Endothelial cell of umbilical vein (primary cell): ENCODE measurements at regions of chr19 and their contacts with region 1.

Region 1: GRCh38 chr19:58380722-58381466 is at the start of gene ZNF837:
- DNase-seq: peak; percentile 100
- H3K4me3 ChIP-seq: peak within 1 kb of the TSS; percentile 59 to 84 (median 72)
- H3K27ac ChIP-seq: peak within 1 kb of the TSS; percentile 63
- H3K4me1 ChIP-seq: peaks cover 8% of the 10 kb centered on the region
- H3K27me3 ChIP-seq: no peaks in the 10 kb centered on the region
- CTCF ChIP-seq: no peak
- POLR2A ChIP-seq: peak; percentile 72
- total RNA-seq, gene ZNF837: 1.4 and 1.7 TPM in 2 replicates

Region 2: GRCh38 chr19:58278157-58279041 is 102.5 kb before region 1 on chr19 and contains the start of gene ZNF8:
- CTCF ChIA-PET with region 1: no interaction called
- POLR2A ChIA-PET with region 1: no interaction called
- dilution Hi-C with region 1: no loop called
- intact Hi-C with region 1: loop called (anchors 1 kb)
- DNase-seq: peak; percentile 99
- H3K4me3 ChIP-seq: peak within 1 kb of the TSS; percentile 67 to 72 (median 70)
- H3K27ac ChIP-seq: peak within 1 kb of the TSS; percentile 76
- H3K4me1 ChIP-seq: peaks cover 8% of the 10 kb centered on the region
- H3K27me3 ChIP-seq: no peaks in the 10 kb centered on the region
- CTCF ChIP-seq: peak in 1 of 2 donors; percentile 22
- POLR2A ChIP-seq: peak; percentile 68
- total RNA-seq, gene ZNF8: 6.3 and 6.8 TPM in 2 replicates

Region 3: DNA sequence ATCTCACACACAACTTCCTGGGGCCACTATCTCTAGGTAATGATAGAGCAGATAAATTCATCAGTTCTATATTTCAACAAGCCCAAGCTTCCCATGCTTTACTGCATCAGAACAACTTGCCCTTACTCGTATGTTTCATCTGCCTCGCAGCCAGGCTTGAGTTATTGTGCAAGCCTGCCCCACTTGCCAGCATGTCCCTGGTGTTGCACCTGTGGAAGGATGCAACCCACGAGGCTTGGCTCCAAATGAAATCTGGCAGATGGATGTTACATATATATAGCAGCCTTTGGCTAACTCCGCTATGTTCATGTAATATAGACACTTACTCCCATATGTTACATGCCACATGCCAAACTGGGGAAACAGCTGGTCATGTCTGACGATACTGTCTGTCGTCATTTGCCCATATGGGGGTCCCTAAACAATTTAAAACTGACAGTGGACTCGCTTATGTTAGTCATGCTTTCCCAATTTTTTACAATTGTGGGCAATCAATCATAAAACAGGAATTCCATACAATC is 69.5 kb before region 1 on chr19:
- CTCF ChIA-PET with region 1: no interaction called
- POLR2A ChIA-PET with region 1: no interaction called
- dilution Hi-C with region 1: no loop called
- intact Hi-C with region 1: no loop called
- DNase-seq: no peak
- H3K4me3 ChIP-seq: no peak overlapping the region
- H3K27ac ChIP-seq: no peak overlapping the region
- H3K4me1 ChIP-seq: no peaks in the 10 kb centered on the region
- H3K27me3 ChIP-seq: no peaks in the 10 kb centered on the region
- CTCF ChIP-seq: no peak
- POLR2A ChIP-seq: no peak

Region 4: DNA sequence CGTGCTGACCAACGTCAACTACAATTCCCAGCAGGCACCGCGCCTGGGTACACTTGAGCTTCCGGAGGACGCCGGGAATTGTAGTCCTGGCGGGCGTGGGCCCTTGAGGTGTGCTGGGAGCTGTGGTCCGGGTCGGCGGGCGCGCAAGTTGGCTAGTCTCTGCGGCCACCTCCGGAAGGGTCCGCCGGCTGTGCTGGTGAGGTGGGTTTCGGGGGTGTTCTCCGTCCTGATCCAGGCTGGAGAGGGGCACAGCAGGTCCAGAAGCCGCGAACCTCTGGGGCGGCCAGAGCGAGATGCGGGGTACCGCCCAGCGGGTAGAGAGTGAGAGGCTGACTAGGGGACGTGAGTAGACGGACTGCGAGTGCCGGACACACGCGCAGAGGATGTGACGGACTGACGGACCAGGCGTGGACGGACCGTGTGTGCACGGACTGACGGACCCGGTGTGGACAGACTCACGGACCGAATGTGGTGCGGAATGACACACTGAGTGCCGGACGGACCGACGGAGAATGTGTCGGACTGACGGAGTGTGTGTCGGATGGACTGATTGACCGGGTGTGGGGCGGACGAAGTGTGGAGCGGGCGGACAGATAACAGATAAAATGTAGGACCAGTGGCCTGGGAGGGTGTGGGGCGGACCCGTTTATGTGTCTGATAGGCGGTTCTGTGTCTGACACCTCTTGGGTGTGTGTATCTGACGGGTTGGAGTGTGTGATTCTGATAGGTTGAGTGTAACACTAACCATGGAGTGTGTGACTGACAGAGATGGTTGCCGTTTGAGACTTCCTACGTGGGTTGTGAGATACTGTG is 53.8 kb before region 1 on chr19 and contains the start of gene ZSCAN22:
- CTCF ChIA-PET with region 1: no interaction called
- POLR2A ChIA-PET with region 1: no interaction called
- dilution Hi-C with region 1: no loop called
- intact Hi-C with region 1: loop called (anchors 1 kb)
- DNase-seq: peak; percentile 96
- H3K4me3 ChIP-seq: peak within 1 kb of the TSS; percentile 3 to 63 (median 56)
- H3K27ac ChIP-seq: peak within 1 kb of the TSS; percentile 1
- H3K4me1 ChIP-seq: peaks cover 12% of the 10 kb centered on the region
- H3K27me3 ChIP-seq: no peaks in the 10 kb centered on the region
- CTCF ChIP-seq: no peak
- POLR2A ChIP-seq: peak; percentile 76
- total RNA-seq, gene ZSCAN22: 3.6 and 3.7 TPM in 2 replicates

Region 5: DNA sequence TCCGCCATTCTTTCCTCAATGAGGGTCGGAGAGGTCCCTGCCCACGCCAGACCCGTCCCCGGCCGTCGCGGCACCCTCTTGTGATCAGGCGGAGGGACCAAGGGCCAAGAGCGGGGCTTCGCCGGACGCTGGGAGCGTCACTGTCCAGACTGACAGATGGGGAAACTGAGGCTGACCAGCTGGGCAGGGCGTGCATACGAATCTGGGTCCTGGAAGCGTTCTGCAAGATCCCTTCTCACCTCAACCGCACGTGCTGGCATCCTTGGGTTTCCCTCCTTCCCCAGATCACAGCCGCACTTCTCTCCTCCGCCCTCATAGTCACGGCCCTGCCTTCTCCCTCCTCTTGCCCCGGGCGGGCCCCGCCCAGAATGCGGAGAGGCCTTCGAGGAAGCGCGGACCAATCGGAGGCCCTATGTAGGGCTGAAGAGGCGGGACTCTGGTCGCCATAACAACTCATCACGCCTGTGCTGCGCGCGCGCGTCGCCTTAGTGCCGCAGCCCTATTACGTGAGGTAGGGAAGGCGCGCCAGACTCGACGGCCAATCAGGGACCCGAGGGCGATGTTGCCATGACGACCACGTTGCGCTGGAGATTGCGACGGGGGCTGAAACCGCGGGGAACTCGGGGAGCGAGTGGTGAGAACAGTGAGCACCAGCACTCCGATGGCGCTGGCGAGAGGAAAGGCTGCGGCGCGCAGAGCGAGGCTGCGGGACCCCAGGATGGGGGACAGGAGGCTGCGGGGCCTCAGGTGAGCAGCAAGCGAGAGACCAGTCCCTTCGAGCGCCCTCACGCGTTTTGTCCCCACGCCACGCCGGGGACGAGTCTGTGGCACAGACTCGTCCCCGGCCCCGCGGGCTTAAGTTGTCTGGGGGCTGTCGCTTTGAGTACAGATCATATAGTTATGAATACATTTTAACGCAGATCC is 20.3 kb after region 1 on chr19:
- CTCF ChIA-PET with region 1: no interaction called
- POLR2A ChIA-PET with region 1: no interaction called
- dilution Hi-C with region 1: no loop called
- intact Hi-C with region 1: loop called (anchors 1 kb)
- DNase-seq: peak; percentile 100
- H3K4me3 ChIP-seq: peak overlapping the region in 2 of 3 experiments; percentile 41 to 43
- H3K27ac ChIP-seq: no peak overlapping the region
- H3K4me1 ChIP-seq: peaks cover 12% of the 10 kb centered on the region
- H3K27me3 ChIP-seq: no peaks in the 10 kb centered on the region
- CTCF ChIP-seq: no peak
- POLR2A ChIP-seq: peak; percentile 22

Region 6: GRCh38 chr19:58439576-58440554 is 59.0 kb after region 1 on chr19 and contains the start of gene ZNF132:
- CTCF ChIA-PET with region 1: no interaction called
- POLR2A ChIA-PET with region 1: no interaction called
- dilution Hi-C with region 1: no loop called
- intact Hi-C with region 1: no loop called
- DNase-seq: peak; percentile 100
- H3K4me3 ChIP-seq: peak within 1 kb of the TSS; percentile 31 to 83 (median 57)
- H3K27ac ChIP-seq: peak within 1 kb of the TSS; percentile 48
- H3K4me1 ChIP-seq: peaks cover 7% of the 10 kb centered on the region
- H3K27me3 ChIP-seq: peaks cover 0 to 2% of the 10 kb centered on the region in 2 experiments
- CTCF ChIP-seq: no peak
- POLR2A ChIP-seq: peak; percentile 67
- total RNA-seq, gene ZNF132: 4.1 and 4.2 TPM in 2 replicates

Region 7: GRCh38 chr19:58460039-58460438 is 79.1 kb after region 1 on chr19:
- CTCF ChIA-PET with region 1: no interaction called
- POLR2A ChIA-PET with region 1: no interaction called
- dilution Hi-C with region 1: no loop called
- intact Hi-C with region 1: no loop called
- DNase-seq: no peak
- H3K4me3 ChIP-seq: no peak overlapping the region
- H3K27ac ChIP-seq: no peak overlapping the region
- H3K4me1 ChIP-seq: no peaks in the 10 kb centered on the region
- H3K27me3 ChIP-seq: no peaks in the 10 kb centered on the region
- CTCF ChIP-seq: no peak
- POLR2A ChIP-seq: no peak